Activated naive CD4-positive, alpha-beta T cell treated with anti-CD3 and anti-CD28 coated beads, Interleukin-2, amount 10 ng/mL, durations not matched to agents 7 days and 5 days (primary cell): ENCODE measurements at regions of chr11 and their contacts with region 1.

Region 1: GRCh38 chr11:113553235-113553634 is 78.0 kb upstream of the DRD2 start:
- DNase-seq: no peak
- H3K4me3 Mint-ChIP-seq: no peak overlapping the region
- H3K27ac Mint-ChIP-seq: no peak overlapping the region
- H3K4me1 Mint-ChIP-seq: no peaks in the 10 kb centered on the region
- H3K27me3 Mint-ChIP-seq: peaks cover 15% of the 10 kb centered on the region

Region 2: DNA sequence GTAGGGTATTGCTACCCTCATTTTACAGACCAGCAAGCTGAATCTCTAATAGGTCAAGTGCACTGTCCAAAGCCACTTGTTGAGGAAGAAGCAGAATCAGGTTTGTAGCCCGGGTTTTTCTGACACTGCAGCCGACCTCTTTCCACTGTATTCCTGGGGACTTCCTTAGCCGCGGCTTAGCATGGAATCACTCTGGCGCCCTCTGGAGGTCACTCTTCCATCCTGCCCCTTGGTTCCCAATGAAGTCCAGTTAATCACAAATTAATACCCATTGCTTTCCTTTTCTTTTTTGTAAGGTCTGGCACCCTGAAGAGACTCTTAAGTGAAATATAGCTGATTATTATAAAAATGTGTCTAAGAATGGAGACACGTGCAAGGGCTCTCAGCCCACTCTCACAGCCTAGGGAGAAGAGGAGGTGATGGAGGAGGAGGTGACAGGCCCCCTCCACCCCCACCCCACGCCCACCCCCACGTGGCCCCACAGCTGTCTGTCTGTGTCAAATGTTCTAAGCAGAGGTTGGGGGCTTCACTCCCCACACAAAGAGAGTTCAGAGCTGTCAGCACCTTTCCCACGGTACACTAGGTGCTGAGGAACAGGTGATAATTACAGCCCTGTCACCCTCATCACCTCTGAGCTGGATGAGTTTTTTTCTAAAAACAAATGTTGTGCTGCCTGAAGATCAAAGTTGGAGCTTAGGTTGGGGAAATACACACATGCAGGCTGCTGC is 20.4 kb before region 1 on chr11:
- CTCF ChIA-PET with region 1: interaction called, 14 read pairs
- DNase-seq: peak; percentile 71
- H3K4me3 Mint-ChIP-seq: no peak overlapping the region
- H3K27ac Mint-ChIP-seq: no peak overlapping the region
- H3K4me1 Mint-ChIP-seq: no peaks in the 10 kb centered on the region
- H3K27me3 Mint-ChIP-seq: peaks cover 20% of the 10 kb centered on the region